ENCODE measurements at regions of chr1 and their contacts with region 1.

Region 1: DNA sequence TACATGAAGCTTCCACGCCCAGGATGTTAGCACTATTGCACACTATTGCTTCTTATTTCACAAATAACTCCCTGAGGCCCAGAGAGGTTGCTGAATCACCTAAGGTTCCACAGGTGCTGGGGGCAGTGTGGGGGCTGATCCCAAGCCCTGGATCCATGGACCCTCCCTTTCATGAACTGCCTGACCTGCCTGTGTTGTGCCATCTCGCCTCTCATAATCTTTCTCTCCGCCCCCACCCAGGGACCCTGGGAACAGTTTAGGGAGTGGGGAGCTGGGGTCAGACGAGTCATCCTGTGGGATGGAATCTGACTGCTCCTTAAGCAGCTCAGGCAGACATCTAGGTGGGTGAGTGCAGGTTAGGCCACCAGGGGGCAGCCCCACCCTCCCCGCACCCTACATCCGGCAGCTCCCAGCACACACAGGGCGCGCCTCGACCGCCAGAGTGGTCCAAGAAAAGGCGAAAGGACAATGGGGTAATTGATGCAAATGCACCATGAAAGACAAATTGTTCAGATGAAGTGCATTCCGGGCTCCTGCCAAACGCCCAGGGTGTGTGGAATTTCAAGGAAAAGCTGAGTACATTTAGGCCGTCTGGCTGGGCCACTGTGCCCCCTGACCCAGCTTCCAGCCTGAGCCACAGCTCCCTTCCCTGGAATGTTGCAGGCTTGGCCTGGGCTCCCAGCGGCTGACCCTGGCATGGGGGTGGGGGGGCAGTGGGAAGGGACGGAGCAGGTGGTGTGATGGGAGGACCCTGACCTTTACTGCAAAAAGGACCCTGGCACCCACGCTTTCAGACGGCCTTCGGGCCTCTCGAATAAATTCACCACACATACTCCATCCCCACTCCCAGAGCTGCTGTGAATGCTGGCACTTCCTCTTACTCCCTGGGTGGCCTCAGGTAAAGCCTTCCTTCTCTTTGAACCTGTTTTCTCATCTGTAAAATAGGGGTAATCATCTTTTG is 20.8 kb downstream of the PHLDA3 start:
- DNase-seq: peak; percentile 77
- H3K4me3 ChIP-seq: peak overlapping the region; percentile 23
- H3K27ac ChIP-seq: peak overlapping the region; percentile 28
- H3K4me1 ChIP-seq: peaks cover 43% of the 10 kb centered on the region
- CTCF ChIP-seq: peak; percentile 92

Region 2: GRCh38 chr1:201254625-201255506 is 193.3 kb before region 1 on chr1:
- CTCF ChIA-PET with region 1: interaction called, 10 read pairs
- POLR2A ChIA-PET with region 1: no interaction called
- intact Hi-C with region 1: no loop called
- DNase-seq: peak; percentile 50
- H3K4me3 ChIP-seq: no peak overlapping the region
- H3K27ac ChIP-seq: no peak overlapping the region
- H3K4me1 ChIP-seq: no peaks in the 10 kb centered on the region
- CTCF ChIP-seq: peak; percentile 88

Region 3: GRCh38 chr1:201374364-201374763 is 73.8 kb before region 1 on chr1:
- CTCF ChIA-PET with region 1: no interaction called
- POLR2A ChIA-PET with region 1: no interaction called
- intact Hi-C with region 1: no loop called
- DNase-seq: no peak
- H3K4me3 ChIP-seq: no peak overlapping the region
- H3K27ac ChIP-seq: no peak overlapping the region
- H3K4me1 ChIP-seq: no peaks in the 10 kb centered on the region
- CTCF ChIP-seq: no peak

Region 4: GRCh38 chr1:201419746-201420607 is 28.2 kb before region 1 on chr1:
- CTCF ChIA-PET with region 1: interaction called, 10 read pairs
- POLR2A ChIA-PET with region 1: no interaction called
- intact Hi-C with region 1: no loop called
- DNase-seq: no peak
- H3K4me3 ChIP-seq: no peak overlapping the region
- H3K27ac ChIP-seq: no peak overlapping the region
- H3K4me1 ChIP-seq: peaks cover 59% of the 10 kb centered on the region
- CTCF ChIP-seq: no peak

Region 5: GRCh38 chr1:201466492-201466891 is 18.3 kb after region 1 on chr1:
- CTCF ChIA-PET with region 1: interaction called, 12 read pairs
- POLR2A ChIA-PET with region 1: interaction called, 6 read pairs
- intact Hi-C with region 1: no loop called
- DNase-seq: no peak
- H3K4me3 ChIP-seq: no peak overlapping the region
- H3K27ac ChIP-seq: no peak overlapping the region
- H3K4me1 ChIP-seq: no peaks in the 10 kb centered on the region
- CTCF ChIP-seq: no peak

Region 6: GRCh38 chr1:201511941-201512539 is 63.8 kb after region 1 on chr1:
- CTCF ChIA-PET with region 1: interaction called, 14 read pairs
- POLR2A ChIA-PET with region 1: interaction called, 3 read pairs
- intact Hi-C with region 1: loop called (anchors 1 kb)
- DNase-seq: peak; percentile 62
- H3K4me3 ChIP-seq: peak overlapping the region; percentile 46
- H3K27ac ChIP-seq: peak overlapping the region; percentile 58
- H3K4me1 ChIP-seq: peaks cover 59% of the 10 kb centered on the region
- CTCF ChIP-seq: no peak